HepG2 (cell line): ENCODE measurements at regions of chr2 and their contacts with region 1.

Region 1: DNA sequence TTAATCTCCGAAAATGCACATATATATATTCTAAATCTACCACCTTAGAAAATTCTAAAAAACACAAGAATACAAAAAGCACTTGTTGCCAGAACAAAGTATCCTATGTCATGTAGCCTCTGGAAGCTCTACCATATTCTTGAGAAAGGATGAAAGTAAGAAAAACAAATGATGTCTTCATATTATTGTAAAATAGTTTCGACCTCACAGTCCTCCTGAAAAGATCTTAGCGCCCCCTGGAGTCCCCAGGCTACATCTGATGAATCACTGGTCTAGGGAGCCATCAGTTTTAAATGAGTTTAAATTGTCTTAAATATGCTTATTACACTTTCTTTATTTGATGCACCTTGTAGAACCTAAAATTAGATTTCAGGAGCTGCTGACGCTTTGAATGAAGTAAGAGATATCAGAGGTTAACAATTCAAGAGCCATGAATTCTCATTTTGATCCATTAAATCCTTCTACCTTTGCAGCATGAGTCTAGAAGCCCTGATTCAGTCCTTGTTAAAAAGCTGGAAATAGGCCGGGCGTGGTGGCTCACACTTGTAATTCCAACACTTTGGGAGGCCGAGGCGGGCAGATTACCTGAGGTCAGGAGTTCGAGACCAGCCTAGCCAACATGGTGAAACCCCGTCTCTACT is 138.8 kb downstream of the MCFD2 start:
- DNase-seq: peak; percentile 69
- ATAC-seq: no peak
- H3K4me3 ChIP-seq: no peak overlapping the region
- H3K27ac ChIP-seq: no peak overlapping the region
- H3K4me1 ChIP-seq: peaks cover 49% of the 10 kb centered on the region
- H3K27me3 ChIP-seq: no peaks in the 10 kb centered on the region
- CTCF ChIP-seq: peak; percentile 77
- EP300 ChIP-seq: no peak
- POLR2A ChIP-seq: no peak
- RAD21 ChIP-seq: peak; percentile 63

Region 2: GRCh38 chr2:46632349-46632748 is 144.5 kb before region 1 on chr2:
- CTCF ChIA-PET with region 1: interaction called, 4 read pairs
- POLR2A ChIA-PET with region 1: no interaction called
- in situ Hi-C with region 1: no loop called
- intact Hi-C with region 1: loop called (anchors 1 kb)
- DNase-seq: peak; percentile 50
- ATAC-seq: peak; percentile 55; the same call in 2 of the 3 replicates
- H3K4me3 ChIP-seq: no peak overlapping the region
- H3K27ac ChIP-seq: no peak overlapping the region
- H3K4me1 ChIP-seq: no peaks in the 10 kb centered on the region
- H3K27me3 ChIP-seq: no peaks in the 10 kb centered on the region
- CTCF ChIP-seq: peak; percentile 61
- EP300 ChIP-seq: no peak
- POLR2A ChIP-seq: no peak
- RAD21 ChIP-seq: peak; percentile 63; the same call in 1 of the 2 replicates